Activated B cell treated with CpG ODN at 0.5 μM for 24 hours (primary cell): ENCODE measurements at regions of chr21 and their contacts with region 1.

Region 1: DNA sequence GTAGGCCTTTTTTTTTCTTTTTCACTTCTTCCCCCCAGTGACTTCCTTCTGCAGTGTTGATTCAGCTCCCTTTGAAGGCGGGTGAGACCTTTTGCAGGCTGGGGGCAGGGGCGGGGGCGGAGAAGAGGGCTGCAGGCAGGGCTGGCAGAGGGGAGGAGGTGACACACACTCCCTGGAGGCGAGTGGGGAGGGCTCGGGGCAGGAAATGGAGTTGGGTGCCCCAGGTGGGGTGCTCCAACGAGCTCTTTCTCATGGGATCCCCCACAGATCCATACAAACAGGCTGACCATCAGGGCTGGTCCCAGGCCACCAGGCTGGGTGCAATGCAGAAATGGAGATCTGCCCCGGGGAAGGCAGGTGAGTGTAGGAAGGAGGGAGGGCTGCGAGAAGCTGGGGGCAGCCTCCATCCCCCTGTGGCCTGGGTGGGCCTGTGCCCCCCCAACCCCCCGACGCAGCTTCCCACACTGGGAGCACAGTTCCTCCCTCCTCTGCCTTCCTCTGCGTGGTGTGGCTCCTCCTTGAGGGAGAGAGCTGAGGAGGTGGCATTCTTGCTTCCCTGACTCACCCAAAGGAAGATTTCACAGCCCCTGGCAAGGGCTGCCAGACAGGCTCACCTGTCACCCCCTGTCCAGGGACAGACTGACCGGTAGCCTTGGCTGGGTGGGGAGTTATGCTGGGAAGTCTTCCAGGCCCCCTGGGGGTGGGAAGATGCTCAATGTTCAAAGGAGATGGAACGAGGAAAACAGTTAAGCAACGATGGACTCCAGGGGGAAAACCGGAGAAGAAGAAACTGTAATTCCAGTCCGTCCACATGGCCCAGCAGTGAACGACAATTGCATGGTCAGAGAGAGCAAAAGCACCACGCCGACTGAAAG is 7.1 kb upstream of the ITGB2 start:
- DNase-seq: peak; percentile 57
- ATAC-seq: peak; percentile 61
- H3K4me3 Mint-ChIP-seq: peak overlapping the region; percentile 79
- H3K27ac Mint-ChIP-seq: peak overlapping the region; percentile 93
- H3K4me1 Mint-ChIP-seq: peaks cover 86% of the 10 kb centered on the region
- H3K27me3 Mint-ChIP-seq: no peaks in the 10 kb centered on the region
- CTCF ChIP-seq: no peak

Region 2: GRCh38 chr21:44338971-44339910 is 588.6 kb before region 1 on chr21 and contains the start of gene CFAP410:
- CTCF ChIA-PET with region 1: no interaction called
- POLR2A ChIA-PET with region 1: interaction called, 8 read pairs
- intact Hi-C with region 1: loop called (anchors 10 kb)
- DNase-seq: peak; percentile 97
- ATAC-seq: peak; percentile 86
- H3K4me3 Mint-ChIP-seq: peak within 1 kb of the TSS; percentile 89
- H3K27ac Mint-ChIP-seq: peak within 1 kb of the TSS; percentile 93
- H3K4me1 Mint-ChIP-seq: peaks cover 24% of the 10 kb centered on the region
- H3K27me3 Mint-ChIP-seq: no peaks in the 10 kb centered on the region
- CTCF ChIP-seq: no peak
- total RNA-seq, gene CFAP410: 50.6 and 62.3 TPM in 2 replicates

Region 3: DNA sequence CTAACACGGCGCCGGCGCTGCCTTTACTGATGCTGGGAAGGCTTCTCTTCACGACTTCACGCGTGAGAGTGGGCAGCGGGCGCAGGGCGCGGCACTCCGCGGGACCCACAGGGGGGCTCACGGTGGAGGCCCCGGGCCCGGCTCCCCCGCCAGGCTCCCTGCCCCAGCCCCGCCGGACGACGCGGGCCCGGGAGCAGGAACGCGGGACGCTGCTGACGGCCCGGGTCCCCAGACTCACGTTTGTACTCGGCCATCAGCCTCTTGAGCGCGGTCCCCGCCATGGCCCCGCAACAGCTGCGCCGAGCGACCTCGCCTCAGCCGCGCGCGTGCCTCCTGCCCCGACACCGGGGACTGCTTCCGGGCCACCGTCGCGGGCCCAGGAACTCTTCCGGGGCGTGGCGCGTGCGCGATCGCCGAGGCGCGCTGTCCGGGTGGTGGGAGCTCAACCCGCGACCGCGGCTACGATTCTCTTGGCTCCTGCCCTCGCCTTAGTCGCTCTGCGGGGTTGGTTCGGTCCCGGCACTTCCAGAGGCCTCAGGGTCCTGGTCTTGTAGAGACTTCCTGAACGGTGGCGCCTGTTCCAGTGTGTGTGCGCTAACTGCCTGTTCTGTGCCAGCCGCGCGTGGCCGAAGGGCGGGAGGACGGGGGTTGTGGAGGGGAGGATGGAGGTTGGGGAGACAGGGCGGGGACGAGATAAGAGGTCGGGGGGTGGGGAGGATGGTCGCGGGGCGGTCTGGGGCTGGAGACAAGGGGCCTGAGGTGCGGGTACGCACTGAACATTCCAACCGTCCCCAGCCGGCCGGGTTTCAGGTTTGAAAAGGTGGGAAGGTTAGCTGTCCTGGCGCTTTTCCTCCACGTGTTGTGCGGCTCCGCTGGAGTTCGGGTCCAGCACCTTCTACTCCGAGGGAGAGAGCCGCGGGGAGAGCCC is 126.1 kb before region 1 on chr21 and contains the start of gene UBE2G2:
- CTCF ChIA-PET with region 1: interaction called, 46 read pairs
- POLR2A ChIA-PET with region 1: interaction called, 23 read pairs
- intact Hi-C with region 1: loop called (anchors 1 kb)
- DNase-seq: peak; percentile 92
- ATAC-seq: peak; percentile 95
- H3K4me3 Mint-ChIP-seq: peak within 1 kb of the TSS; percentile 99
- H3K27ac Mint-ChIP-seq: peak within 1 kb of the TSS; percentile 91
- H3K4me1 Mint-ChIP-seq: peaks cover 41% of the 10 kb centered on the region
- H3K27me3 Mint-ChIP-seq: no peaks in the 10 kb centered on the region
- CTCF ChIP-seq: no peak
- total RNA-seq, gene UBE2G2: 102 and 108 TPM in 2 replicates

Region 4: GRCh38 chr21:44845399-44846223 is 82.2 kb before region 1 on chr21:
- CTCF ChIA-PET with region 1: interaction called, 3 read pairs
- POLR2A ChIA-PET with region 1: no interaction called
- intact Hi-C with region 1: loop called (anchors 1 kb)
- DNase-seq: peak; percentile 26
- ATAC-seq: peak; percentile 67
- H3K4me3 Mint-ChIP-seq: peak overlapping the region; percentile 52
- H3K27ac Mint-ChIP-seq: no peak overlapping the region
- H3K4me1 Mint-ChIP-seq: peaks cover 15% of the 10 kb centered on the region
- H3K27me3 Mint-ChIP-seq: peaks cover 24% of the 10 kb centered on the region
- CTCF ChIP-seq: no peak

Region 5: DNA sequence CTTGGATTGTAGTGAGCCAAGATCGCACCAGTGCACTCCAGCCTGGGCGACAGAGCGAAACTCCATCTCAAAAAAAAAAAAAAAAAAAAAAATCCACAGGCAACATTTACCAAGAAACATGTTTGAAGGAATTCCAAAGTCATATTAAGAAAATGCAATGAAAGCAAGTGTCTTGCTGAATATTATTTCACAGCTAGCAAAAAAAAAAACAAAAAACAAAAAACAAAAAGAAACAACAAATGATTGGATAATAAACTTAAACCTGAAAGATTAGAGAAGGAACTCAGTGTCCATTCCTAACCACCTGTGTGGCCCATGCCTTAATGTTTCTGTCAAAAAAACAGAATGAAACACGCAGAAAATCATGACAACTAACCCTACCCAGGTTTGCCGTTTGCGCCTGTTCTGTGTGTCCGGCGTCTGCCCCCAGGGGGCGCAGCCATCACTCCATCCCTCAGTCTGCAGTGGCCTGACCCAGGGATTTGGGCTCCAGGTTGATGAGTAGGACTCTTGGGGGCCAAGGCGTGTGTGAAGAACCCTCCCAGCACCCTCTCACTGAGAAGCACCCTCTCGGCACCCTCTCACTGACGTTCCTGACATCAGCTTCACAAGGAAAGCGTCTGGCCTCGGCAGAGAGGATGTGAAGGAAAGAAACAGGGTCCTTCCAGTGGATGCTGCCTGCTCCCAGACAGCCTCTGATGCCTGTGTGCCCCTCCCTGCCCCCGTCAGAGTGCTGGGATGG is 35.1 kb before region 1 on chr21:
- CTCF ChIA-PET with region 1: interaction called, 97 read pairs
- POLR2A ChIA-PET with region 1: interaction called, 84 read pairs
- intact Hi-C with region 1: loop called (anchors 1 kb)
- DNase-seq: peak; percentile 73
- ATAC-seq: peak; percentile 85
- H3K4me3 Mint-ChIP-seq: no peak overlapping the region
- H3K27ac Mint-ChIP-seq: no peak overlapping the region
- H3K4me1 Mint-ChIP-seq: peaks cover 24% of the 10 kb centered on the region
- H3K27me3 Mint-ChIP-seq: no peaks in the 10 kb centered on the region
- CTCF ChIP-seq: peak; percentile 98

Region 6: GRCh38 chr21:45074048-45074817 is 146.4 kb after region 1 on chr21 and contains the start of gene ADARB1:
- CTCF ChIA-PET with region 1: no interaction called
- POLR2A ChIA-PET with region 1: interaction called, 10 read pairs
- intact Hi-C with region 1: no loop called
- DNase-seq: peak; percentile 74
- ATAC-seq: peak; percentile 79
- H3K4me3 Mint-ChIP-seq: peak within 1 kb of the TSS; percentile 89
- H3K27ac Mint-ChIP-seq: peak within 1 kb of the TSS; percentile 82
- H3K4me1 Mint-ChIP-seq: peaks cover 41% of the 10 kb centered on the region
- H3K27me3 Mint-ChIP-seq: no peaks in the 10 kb centered on the region
- CTCF ChIP-seq: no peak
- total RNA-seq, gene ADARB1: 21.6 and 22.6 TPM in 2 replicates